Activated CD4-positive, alpha-beta T cell treated with anti-CD3 and anti-CD28 coated beads for 36 hours (primary cell): ENCODE measurements at regions of chr1 and their contacts with region 1.

Region 1: GRCh38 chr1:44799770-44800584 is at the start of gene PLK3:
- DNase-seq: peak; percentile 99
- ATAC-seq: peak; percentile 84
- H3K4me3 Mint-ChIP-seq: peak within 1 kb of the TSS; percentile 87
- H3K27ac Mint-ChIP-seq: peak within 1 kb of the TSS; percentile 100
- H3K4me1 Mint-ChIP-seq: peaks cover 41% of the 10 kb centered on the region
- H3K27me3 Mint-ChIP-seq: no peaks in the 10 kb centered on the region
- total RNA-seq, gene PLK3: 52.1 to 52.7 TPM

Region 2: GRCh38 chr1:44619261-44619900 is 180.6 kb before region 1 on chr1:
- CTCF ChIA-PET with region 1: no interaction called
- POLR2A ChIA-PET with region 1: no interaction called
- intact Hi-C with region 1: no loop called
- DNase-seq: no peak
- ATAC-seq: no peak
- H3K4me3 Mint-ChIP-seq: no peak overlapping the region
- H3K27ac Mint-ChIP-seq: no peak overlapping the region
- H3K4me1 Mint-ChIP-seq: no peaks in the 10 kb centered on the region
- H3K27me3 Mint-ChIP-seq: no peaks in the 10 kb centered on the region

Region 3: GRCh38 chr1:44674113-44675000 is 125.6 kb before region 1 on chr1 and contains the starts of genes ARMH1 and TMEM53:
- CTCF ChIA-PET with region 1: interaction called, 3 read pairs
- POLR2A ChIA-PET with region 1: no interaction called
- intact Hi-C with region 1: loop called in 1 of 2 experiments (anchors 2 kb)
- DNase-seq: peak; percentile 99
- ATAC-seq: peak; percentile 97
- H3K4me3 Mint-ChIP-seq: peak within 1 kb of the TSS; percentile 78
- H3K27ac Mint-ChIP-seq: peak within 1 kb of the TSS; percentile 84
- H3K4me1 Mint-ChIP-seq: peaks cover 24% of the 10 kb centered on the region
- H3K27me3 Mint-ChIP-seq: no peaks in the 10 kb centered on the region
- total RNA-seq, gene ARMH1: 67.3 to 75.1 TPM
- total RNA-seq, gene TMEM53: 4.3 to 5.5 TPM

Region 4: GRCh38 chr1:44696789-44697345 is 103.1 kb before region 1 on chr1:
- CTCF ChIA-PET with region 1: no interaction called
- POLR2A ChIA-PET with region 1: no interaction called
- intact Hi-C with region 1: no loop called
- DNase-seq: peak; percentile 71
- ATAC-seq: peak; percentile 91
- H3K4me3 Mint-ChIP-seq: no peak overlapping the region
- H3K27ac Mint-ChIP-seq: peak overlapping the region; percentile 77
- H3K4me1 Mint-ChIP-seq: peaks cover 28% of the 10 kb centered on the region
- H3K27me3 Mint-ChIP-seq: no peaks in the 10 kb centered on the region

Region 5: GRCh38 chr1:44739361-44740178 is 60.4 kb before region 1 on chr1 and contains the start of gene KIF2C:
- CTCF ChIA-PET with region 1: no interaction called
- POLR2A ChIA-PET with region 1: no interaction called
- intact Hi-C with region 1: loop called in 1 of 2 experiments (anchors 2 kb)
- DNase-seq: peak; percentile 99
- ATAC-seq: peak; percentile 98
- H3K4me3 Mint-ChIP-seq: peak within 1 kb of the TSS; percentile 98
- H3K27ac Mint-ChIP-seq: peak within 1 kb of the TSS; percentile 94
- H3K4me1 Mint-ChIP-seq: peaks cover 26% of the 10 kb centered on the region
- H3K27me3 Mint-ChIP-seq: no peaks in the 10 kb centered on the region
- total RNA-seq, gene KIF2C: 101 to 119 TPM

Region 6: GRCh38 chr1:44775078-44775929 is 24.7 kb before region 1 on chr1 and contains the start of gene RPS8:
- CTCF ChIA-PET with region 1: interaction called, 13 read pairs
- POLR2A ChIA-PET with region 1: interaction called, 15 read pairs
- intact Hi-C with region 1: loop called in 1 of 2 experiments (anchors 2 kb)
- DNase-seq: peak; percentile 94
- ATAC-seq: peak; percentile 84
- H3K4me3 Mint-ChIP-seq: peak within 1 kb of the TSS; percentile 96
- H3K27ac Mint-ChIP-seq: peak within 1 kb of the TSS; percentile 100
- H3K4me1 Mint-ChIP-seq: peaks cover 33% of the 10 kb centered on the region
- H3K27me3 Mint-ChIP-seq: no peaks in the 10 kb centered on the region
- total RNA-seq, gene RPS8: 3,005 to 3,275 TPM

Region 7: DNA sequence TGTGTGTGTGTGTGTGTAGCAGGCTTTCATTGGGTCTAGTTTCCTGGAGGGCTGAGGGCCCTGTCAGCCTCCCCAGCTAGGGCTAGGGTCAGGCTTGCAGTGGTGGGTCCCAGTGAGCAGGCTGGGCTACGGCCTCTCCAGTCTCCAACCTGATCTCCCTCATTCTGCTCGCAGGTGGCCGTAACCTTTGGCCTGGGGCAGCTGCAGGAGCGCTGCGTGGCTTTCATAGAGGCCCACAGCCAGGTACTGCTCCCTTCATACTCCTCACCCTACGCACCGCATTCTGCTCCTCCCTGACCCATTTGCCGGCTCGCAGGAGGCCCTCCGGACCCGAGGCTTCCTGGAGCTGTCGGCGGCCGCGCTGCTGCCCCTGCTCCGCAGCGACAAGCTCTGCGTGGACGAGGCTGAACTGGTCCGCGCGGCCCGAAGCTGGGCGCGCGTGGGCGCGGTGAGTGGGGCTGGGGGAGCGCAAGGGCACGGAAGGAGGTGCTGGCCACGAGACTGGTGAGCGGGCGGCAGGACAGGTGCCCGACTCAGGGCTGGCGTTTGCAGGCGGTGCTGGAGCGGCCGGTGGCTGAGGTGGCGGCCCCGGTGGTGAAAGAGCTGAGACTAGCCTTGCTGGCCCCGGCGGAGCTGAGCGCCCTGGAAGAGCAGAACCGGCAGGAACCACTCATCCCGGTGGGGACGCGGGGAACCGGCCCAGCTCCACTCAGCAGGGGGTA is 13.0 kb after region 1 on chr1:
- CTCF ChIA-PET with region 1: interaction called, 22 read pairs
- POLR2A ChIA-PET with region 1: interaction called, 337 read pairs
- intact Hi-C with region 1: loop called (anchors 1 kb)
- DNase-seq: no peak
- ATAC-seq: no peak
- H3K4me3 Mint-ChIP-seq: peak overlapping the region; percentile 87
- H3K27ac Mint-ChIP-seq: peak overlapping the region; percentile 25
- H3K4me1 Mint-ChIP-seq: peaks cover 73% of the 10 kb centered on the region
- H3K27me3 Mint-ChIP-seq: no peaks in the 10 kb centered on the region

Region 8: DNA sequence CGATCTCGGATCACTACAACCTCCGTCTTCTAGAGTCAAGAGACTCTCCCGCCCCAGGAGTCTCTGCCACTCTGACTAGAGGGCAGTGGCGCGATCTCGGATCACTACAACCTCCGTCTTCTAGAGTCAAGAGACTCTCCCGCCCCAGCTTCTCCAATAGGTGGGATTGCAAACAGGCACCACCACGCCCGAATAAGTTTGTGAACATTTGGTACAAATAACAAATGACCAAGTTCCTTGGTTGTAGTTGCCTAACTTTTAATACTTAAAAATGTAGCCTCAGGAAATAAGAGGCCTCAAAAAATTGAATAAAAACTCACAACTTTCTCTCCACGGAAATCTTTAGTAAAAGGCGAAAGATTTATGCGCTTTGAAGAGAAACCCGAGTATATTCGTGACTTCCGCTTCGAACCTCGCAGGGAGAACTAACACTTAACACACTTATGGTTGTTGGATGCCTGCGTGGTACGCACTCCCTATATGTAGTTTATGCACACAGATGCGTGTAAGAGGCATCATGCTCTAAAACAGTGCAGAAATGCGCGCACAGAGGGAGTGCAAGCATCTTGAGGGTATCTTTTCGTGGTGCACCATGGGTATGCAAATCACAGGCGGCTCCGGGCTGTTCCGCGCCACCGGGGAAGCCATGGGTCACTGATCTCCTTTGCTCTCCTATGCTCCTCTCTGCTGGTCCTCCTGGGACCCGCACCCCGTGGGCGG is 19.8 kb after region 1 on chr1:
- CTCF ChIA-PET with region 1: interaction called, 22 read pairs
- POLR2A ChIA-PET with region 1: interaction called, 337 read pairs
- intact Hi-C with region 1: loop called (anchors 1 to 2 kb)
- DNase-seq: peak; percentile 88
- ATAC-seq: peak; percentile 88
- H3K4me3 Mint-ChIP-seq: peak overlapping the region; percentile 85
- H3K27ac Mint-ChIP-seq: peak overlapping the region; percentile 100
- H3K4me1 Mint-ChIP-seq: peaks cover 37% of the 10 kb centered on the region
- H3K27me3 Mint-ChIP-seq: no peaks in the 10 kb centered on the region